CD4-positive, alpha-beta memory T cell (primary cell): ENCODE measurements at regions of chr16 and their contacts with region 1.

Region 1: DNA sequence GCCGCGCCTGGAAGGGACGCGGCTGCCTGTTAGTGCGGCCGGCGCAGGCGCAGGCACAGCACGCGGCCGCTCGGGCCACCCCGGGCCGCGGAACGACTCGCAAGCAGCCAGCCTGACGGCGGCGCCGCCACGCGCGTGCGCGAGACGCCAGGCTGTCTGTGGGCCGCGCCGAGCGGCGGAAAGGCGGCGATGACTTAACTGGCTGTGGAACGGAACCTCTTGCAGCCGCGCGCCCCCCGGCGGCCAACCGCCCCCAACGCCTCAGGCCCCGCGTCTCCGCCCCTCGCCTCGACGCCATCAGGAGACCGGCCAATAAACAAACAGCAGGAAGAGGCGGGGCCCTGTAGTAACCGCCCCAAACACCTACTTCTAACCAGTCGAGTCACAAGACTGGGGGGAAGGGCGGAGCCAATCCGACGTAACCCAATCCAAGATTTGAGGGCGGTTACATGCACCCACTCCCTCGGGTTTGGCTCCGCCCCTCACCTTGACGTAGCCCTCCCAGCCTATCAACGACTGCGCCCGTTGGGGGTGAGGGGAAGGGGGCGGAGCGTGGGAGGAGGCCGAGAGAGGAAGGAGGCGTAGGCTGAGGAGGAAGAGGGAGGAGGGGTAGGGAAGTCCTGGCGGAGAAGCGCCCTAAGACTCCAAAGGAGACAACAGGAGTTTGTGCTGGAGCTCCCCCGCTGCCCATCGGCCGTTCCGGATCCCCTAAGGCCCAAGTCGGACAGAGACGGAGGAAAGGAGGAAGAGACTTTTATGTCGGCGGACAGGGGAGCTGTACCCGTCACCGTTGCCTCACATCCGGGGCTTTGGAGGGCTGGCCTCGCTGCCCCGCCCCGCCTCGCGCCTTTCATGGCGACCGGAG is at the start of gene FBRS:
- DNase-seq: peak; percentile 100
- H3K4me3 ChIP-seq: peak within 1 kb of the TSS; percentile 70 to 93
- H3K4me3 Mint-ChIP-seq: peak within 1 kb of the TSS; percentile 92 to 99 (median 96)
- H3K27ac ChIP-seq: peak within 1 kb of the TSS; percentile 99
- H3K27ac Mint-ChIP-seq: peak within 1 kb of the TSS; percentile 98 to 100 (median 100)
- H3K4me1 ChIP-seq: peaks cover 43% of the 10 kb centered on the region
- H3K4me1 Mint-ChIP-seq: peaks cover 25 to 52% (median 39%) of the 10 kb centered on the region in 4 donors
- H3K27me3 ChIP-seq: no peaks in the 10 kb centered on the region
- H3K27me3 Mint-ChIP-seq: no peaks in the 10 kb centered on the region
- total RNA-seq, gene FBRS: 164 to 172 TPM

Region 2: GRCh38 chr16:30183233-30184095 is 474.6 kb before region 1 on chr16 and contains the start of gene CORO1A:
- CTCF ChIA-PET with region 1: no interaction called
- POLR2A ChIA-PET with region 1: interaction called, 12 read pairs
- intact Hi-C with region 1: no loop called
- DNase-seq: peak; percentile 80 to 87 (median 84)
- H3K4me3 ChIP-seq: peak within 1 kb of the TSS; percentile 91 to 93
- H3K4me3 Mint-ChIP-seq: peak within 1 kb of the TSS; percentile 94 to 99 (median 98)
- H3K27ac ChIP-seq: peak within 1 kb of the TSS; percentile 77
- H3K27ac Mint-ChIP-seq: peak within 1 kb of the TSS; percentile 96 to 99 (median 97)
- H3K4me1 ChIP-seq: peaks cover 40% of the 10 kb centered on the region
- H3K4me1 Mint-ChIP-seq: peaks cover 15 to 59% (median 29%) of the 10 kb centered on the region in 4 donors
- H3K27me3 ChIP-seq: no peaks in the 10 kb centered on the region
- H3K27me3 Mint-ChIP-seq: no peaks in the 10 kb centered on the region
- total RNA-seq, gene CORO1A: 745 to 769 TPM

Region 3: GRCh38 chr16:30437486-30438046 is 220.5 kb before region 1 on chr16:
- CTCF ChIA-PET with region 1: no interaction called
- POLR2A ChIA-PET with region 1: no interaction called
- intact Hi-C with region 1: no loop called
- DNase-seq: no peak
- H3K4me3 ChIP-seq: no peak overlapping the region
- H3K4me3 Mint-ChIP-seq: no peak overlapping the region
- H3K27ac ChIP-seq: no peak overlapping the region
- H3K27ac Mint-ChIP-seq: peak overlapping the region in 2 of 7 donors; percentile 64 to 78
- H3K4me1 ChIP-seq: peaks cover 13% of the 10 kb centered on the region
- H3K4me1 Mint-ChIP-seq: peaks cover 9 to 24% (median 17%) of the 10 kb centered on the region in 4 donors
- H3K27me3 ChIP-seq: no peaks in the 10 kb centered on the region
- H3K27me3 Mint-ChIP-seq: no peaks in the 10 kb centered on the region

Region 4: DNA sequence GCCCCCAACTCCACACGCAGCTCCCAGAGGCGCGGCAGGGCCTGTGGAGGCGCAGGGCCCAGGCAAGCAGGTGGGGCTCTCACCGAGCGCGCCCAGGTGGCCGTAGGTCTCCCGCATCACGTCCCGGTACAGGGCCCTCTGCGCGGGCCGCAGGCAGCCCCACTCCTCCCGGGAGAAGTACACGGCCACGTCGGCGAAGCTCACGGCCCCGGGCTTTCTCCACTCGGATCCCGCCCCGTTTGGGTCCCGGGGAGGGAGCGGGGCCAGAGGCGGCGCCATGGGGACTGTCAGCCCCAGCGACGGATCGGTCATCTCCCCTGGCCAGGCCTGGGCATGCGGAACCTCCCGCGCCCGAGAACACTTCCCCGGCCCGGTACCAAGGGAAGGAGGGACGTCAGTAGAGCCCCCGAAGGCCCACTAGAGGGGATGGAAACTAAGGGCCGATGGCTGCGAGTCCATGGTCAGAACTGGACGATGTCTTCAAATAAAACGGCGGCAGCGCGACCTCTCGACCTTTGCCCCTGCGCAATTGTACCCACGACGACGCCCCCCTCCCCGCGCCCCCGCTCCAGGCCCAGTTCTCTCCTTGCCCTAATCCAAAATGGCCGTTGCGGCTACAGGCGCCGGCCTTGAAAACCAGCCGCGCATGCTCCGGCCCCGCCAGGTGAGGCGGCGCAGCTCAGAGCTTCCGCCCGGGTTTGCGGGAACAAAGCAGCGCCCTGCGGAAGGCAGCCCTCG is 123.6 kb before region 1 on chr16 and contains the start of gene ZNF747:
- CTCF ChIA-PET with region 1: interaction called, 3 read pairs
- POLR2A ChIA-PET with region 1: interaction called, 21 read pairs
- intact Hi-C with region 1: no loop called
- DNase-seq: peak; percentile 89 to 92 (median 90)
- H3K4me3 ChIP-seq: peak within 1 kb of the TSS; percentile 86 to 92
- H3K4me3 Mint-ChIP-seq: peak within 1 kb of the TSS; percentile 87 to 99 (median 93)
- H3K27ac ChIP-seq: peak within 1 kb of the TSS; percentile 91
- H3K27ac Mint-ChIP-seq: peak within 1 kb of the TSS; percentile 94 to 99 (median 97)
- H3K4me1 ChIP-seq: peaks cover 42% of the 10 kb centered on the region
- H3K4me1 Mint-ChIP-seq: peaks cover 15 to 51% (median 31%) of the 10 kb centered on the region in 4 donors
- H3K27me3 ChIP-seq: no peaks in the 10 kb centered on the region
- H3K27me3 Mint-ChIP-seq: no peaks in the 10 kb centered on the region
- total RNA-seq, gene ZNF747: 15.7 to 17.8 TPM

Region 5: GRCh38 chr16:30628627-30629540 is 29.2 kb before region 1 on chr16:
- CTCF ChIA-PET with region 1: interaction called, 5 read pairs
- POLR2A ChIA-PET with region 1: interaction called, 25 read pairs
- intact Hi-C with region 1: loop called (anchors 1 kb)
- DNase-seq: peak; percentile 72 to 83 (median 80)
- H3K4me3 ChIP-seq: peak overlapping the region in 1 of 2 donors; percentile 48
- H3K4me3 Mint-ChIP-seq: peak overlapping the region; percentile 67 to 86 (median 78)
- H3K27ac ChIP-seq: no peak overlapping the region
- H3K27ac Mint-ChIP-seq: peak overlapping the region; percentile 38 to 95 (median 87)
- H3K4me1 ChIP-seq: peaks cover 9% of the 10 kb centered on the region
- H3K4me1 Mint-ChIP-seq: peaks cover 4 to 9% (median 7%) of the 10 kb centered on the region in 4 donors
- H3K27me3 ChIP-seq: no peaks in the 10 kb centered on the region
- H3K27me3 Mint-ChIP-seq: peaks cover 0 to under 1% of the 10 kb centered on the region in 2 donors

Region 6: GRCh38 chr16:30698139-30698815 is 40.2 kb after region 1 on chr16:
- CTCF ChIA-PET with region 1: interaction called, 47 read pairs
- POLR2A ChIA-PET with region 1: interaction called, 154 read pairs
- intact Hi-C with region 1: loop called (anchors 1 kb)
- DNase-seq: peak; percentile 99 to 100 (median 100)
- H3K4me3 ChIP-seq: peak overlapping the region; percentile 61 to 71
- H3K4me3 Mint-ChIP-seq: peak overlapping the region; percentile 95 to 99 (median 96)
- H3K27ac ChIP-seq: peak overlapping the region; percentile 100
- H3K27ac Mint-ChIP-seq: peak overlapping the region; percentile 100
- H3K4me1 ChIP-seq: peaks cover 36% of the 10 kb centered on the region
- H3K4me1 Mint-ChIP-seq: peaks cover 22 to 44% (median 32%) of the 10 kb centered on the region in 4 donors
- H3K27me3 ChIP-seq: no peaks in the 10 kb centered on the region
- H3K27me3 Mint-ChIP-seq: peaks cover 0 to 3% of the 10 kb centered on the region in 2 donors

Region 7: DNA sequence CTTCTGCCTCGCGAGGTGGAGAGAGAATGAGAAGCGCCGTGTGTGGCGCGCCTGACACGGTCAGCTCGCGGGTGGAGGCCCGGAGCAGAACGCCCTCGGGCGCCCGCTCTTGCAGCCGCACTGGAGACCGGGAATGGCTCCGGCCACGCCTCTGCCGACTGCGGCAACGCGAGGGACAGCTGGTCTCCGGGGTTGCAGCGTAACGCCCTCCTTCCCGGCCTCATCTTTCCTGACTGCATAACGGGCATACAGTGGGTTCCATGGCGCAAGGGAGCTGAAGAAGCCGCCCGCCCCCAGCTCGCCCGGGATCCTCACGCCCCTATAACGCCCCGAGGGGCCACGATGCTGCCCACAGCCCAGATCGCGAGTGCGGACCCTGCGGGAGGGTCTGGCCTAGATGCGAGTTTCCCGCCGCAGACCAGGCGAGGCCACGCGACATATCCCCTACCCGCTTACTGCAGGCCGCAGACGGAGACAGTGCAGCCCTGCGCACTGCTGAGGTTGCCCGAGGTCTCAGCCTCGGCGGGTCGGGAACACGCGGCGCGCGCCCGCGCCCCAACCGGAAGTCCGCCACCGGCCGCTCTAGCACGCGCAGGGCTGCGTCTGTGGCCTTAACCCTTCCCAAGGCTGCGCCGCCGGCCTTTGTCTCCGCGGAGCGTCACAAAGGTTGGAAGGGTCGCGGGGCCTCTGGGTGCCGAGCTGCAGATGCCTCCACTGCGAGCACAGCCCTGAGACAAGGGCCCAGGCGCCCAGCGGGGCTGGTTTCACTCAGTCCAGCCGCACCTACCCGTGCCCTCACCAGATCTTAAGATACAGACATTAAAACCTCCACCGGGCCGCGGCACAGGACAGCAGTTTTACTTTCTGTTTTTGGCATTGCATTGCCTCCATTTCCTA is 217.0 kb after region 1 on chr16:
- CTCF ChIA-PET with region 1: no interaction called
- POLR2A ChIA-PET with region 1: interaction called, 10 read pairs
- intact Hi-C with region 1: no loop called
- DNase-seq: peak; percentile 85 to 89 (median 87)
- H3K4me3 ChIP-seq: peak overlapping the region; percentile 89 to 94
- H3K4me3 Mint-ChIP-seq: peak overlapping the region; percentile 92 to 99 (median 97)
- H3K27ac ChIP-seq: peak overlapping the region; percentile 84
- H3K27ac Mint-ChIP-seq: peak overlapping the region; percentile 91 to 99 (median 94)
- H3K4me1 ChIP-seq: peaks cover 23% of the 10 kb centered on the region
- H3K4me1 Mint-ChIP-seq: peaks cover 16 to 50% (median 31%) of the 10 kb centered on the region in 4 donors
- H3K27me3 ChIP-seq: no peaks in the 10 kb centered on the region
- H3K27me3 Mint-ChIP-seq: no peaks in the 10 kb centered on the region